A549 (cell line): ENCODE measurements at regions of chr5 and their contacts with region 1.

Region 1: GRCh38 chr5:171207256-171207847 is 101.7 kb upstream of the TLX3 start:
- DNase-seq: peak; percentile 52
- ATAC-seq: peak; percentile 62 to 77; a peak in 5 of 6 replicates
- H3K4me3 ChIP-seq: no peak overlapping the region
- H3K27ac ChIP-seq: no peak overlapping the region
- H3K4me1 ChIP-seq: no peaks in the 10 kb centered on the region
- CTCF ChIP-seq: peak; percentile 80
- EP300 ChIP-seq: no peak
- POLR2A ChIP-seq: no peak
- RAD21 ChIP-seq: peak; percentile 65 to 74

Region 2: DNA sequence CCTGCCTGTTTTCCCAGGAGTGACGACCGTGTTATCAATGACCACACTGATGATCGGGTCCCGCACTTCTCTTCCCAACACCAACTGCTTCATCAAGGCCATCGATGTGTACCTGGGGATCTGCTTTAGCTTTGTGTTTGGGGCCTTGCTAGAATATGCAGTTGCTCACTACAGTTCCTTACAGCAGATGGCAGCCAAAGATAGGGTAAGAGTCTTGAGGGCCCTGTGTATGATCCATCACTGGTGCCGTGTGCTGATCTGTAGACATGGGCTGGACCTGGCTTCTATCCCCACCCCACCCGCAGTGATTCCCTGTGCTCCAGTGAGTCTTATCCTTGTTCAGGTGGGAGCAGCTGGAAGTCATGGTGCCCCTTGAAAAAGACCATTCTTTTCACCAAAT is 397.8 kb before region 1 on chr5:
- CTCF ChIA-PET with region 1: interaction called, 22 read pairs
- POLR2A ChIA-PET with region 1: no interaction called
- DNase-seq: peak; percentile 63 to 66
- ATAC-seq: peak; percentile 97
- H3K4me3 ChIP-seq: no peak overlapping the region
- H3K27ac ChIP-seq: no peak overlapping the region
- H3K4me1 ChIP-seq: no peaks in the 10 kb centered on the region
- CTCF ChIP-seq: peak; percentile 60
- EP300 ChIP-seq: no peak
- POLR2A ChIP-seq: no peak
- RAD21 ChIP-seq: peak; percentile 78 to 81

Region 3: GRCh38 chr5:170848033-170848432 is 359.3 kb before region 1 on chr5:
- CTCF ChIA-PET with region 1: no interaction called
- POLR2A ChIA-PET with region 1: no interaction called
- DNase-seq: no peak
- ATAC-seq: peak in 1 of 2 experiments; percentile 46; a peak in 3 of 6 replicates
- H3K4me3 ChIP-seq: no peak overlapping the region
- H3K27ac ChIP-seq: no peak overlapping the region
- H3K4me1 ChIP-seq: peaks cover 10% of the 10 kb centered on the region; the same call in 1 of the 3 replicates
- CTCF ChIP-seq: no peak
- EP300 ChIP-seq: no peak
- POLR2A ChIP-seq: no peak
- RAD21 ChIP-seq: no peak

Region 4: DNA sequence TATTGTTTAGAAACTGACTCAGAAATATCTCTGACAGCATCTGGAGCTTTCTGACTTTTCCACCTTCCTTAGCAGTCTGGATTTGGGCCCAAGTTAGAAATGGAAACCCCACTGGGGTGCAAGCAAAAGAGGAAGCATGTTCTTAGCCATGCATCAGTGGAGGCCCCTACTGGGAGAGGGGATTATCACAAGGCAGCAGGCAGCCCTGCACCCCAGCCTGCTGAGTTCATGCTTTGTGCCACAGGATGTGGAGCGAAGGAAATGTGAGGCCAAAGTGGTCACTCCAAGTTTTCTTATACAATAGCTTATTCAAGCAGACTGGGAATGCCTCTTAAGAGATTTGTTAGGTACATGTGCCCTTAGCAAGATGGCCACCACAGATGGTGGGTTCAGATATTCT is 44.8 kb before region 1 on chr5:
- CTCF ChIA-PET with region 1: no interaction called
- POLR2A ChIA-PET with region 1: no interaction called
- DNase-seq: peak; percentile 4 to 21
- ATAC-seq: peak; percentile 82 to 88
- H3K4me3 ChIP-seq: no peak overlapping the region
- H3K27ac ChIP-seq: no peak overlapping the region
- H3K4me1 ChIP-seq: no peaks in the 10 kb centered on the region
- CTCF ChIP-seq: peak; percentile 27; the same call in 2 of the 3 replicates
- EP300 ChIP-seq: no peak
- POLR2A ChIP-seq: no peak
- RAD21 ChIP-seq: peak in 1 of 2 experiments; percentile 18; a peak in 2 of 5 replicates

Region 5: GRCh38 chr5:171226105-171226754 is 18.9 kb after region 1 on chr5:
- CTCF ChIA-PET with region 1: interaction called, 15 read pairs
- POLR2A ChIA-PET with region 1: no interaction called
- DNase-seq: no peak
- ATAC-seq: 0 out of 6 replicates have a peak, but pooled peaks of 1 of the 2 experiments have one; percentile 43
- H3K4me3 ChIP-seq: no peak overlapping the region
- H3K27ac ChIP-seq: no peak overlapping the region
- H3K4me1 ChIP-seq: no peaks in the 10 kb centered on the region
- CTCF ChIP-seq: peak; percentile 28
- EP300 ChIP-seq: no peak
- POLR2A ChIP-seq: no peak
- RAD21 ChIP-seq: 0 out of 5 replicates have a peak, but pooled peaks of 1 of the 2 experiments have one; percentile 8

Region 6: DNA sequence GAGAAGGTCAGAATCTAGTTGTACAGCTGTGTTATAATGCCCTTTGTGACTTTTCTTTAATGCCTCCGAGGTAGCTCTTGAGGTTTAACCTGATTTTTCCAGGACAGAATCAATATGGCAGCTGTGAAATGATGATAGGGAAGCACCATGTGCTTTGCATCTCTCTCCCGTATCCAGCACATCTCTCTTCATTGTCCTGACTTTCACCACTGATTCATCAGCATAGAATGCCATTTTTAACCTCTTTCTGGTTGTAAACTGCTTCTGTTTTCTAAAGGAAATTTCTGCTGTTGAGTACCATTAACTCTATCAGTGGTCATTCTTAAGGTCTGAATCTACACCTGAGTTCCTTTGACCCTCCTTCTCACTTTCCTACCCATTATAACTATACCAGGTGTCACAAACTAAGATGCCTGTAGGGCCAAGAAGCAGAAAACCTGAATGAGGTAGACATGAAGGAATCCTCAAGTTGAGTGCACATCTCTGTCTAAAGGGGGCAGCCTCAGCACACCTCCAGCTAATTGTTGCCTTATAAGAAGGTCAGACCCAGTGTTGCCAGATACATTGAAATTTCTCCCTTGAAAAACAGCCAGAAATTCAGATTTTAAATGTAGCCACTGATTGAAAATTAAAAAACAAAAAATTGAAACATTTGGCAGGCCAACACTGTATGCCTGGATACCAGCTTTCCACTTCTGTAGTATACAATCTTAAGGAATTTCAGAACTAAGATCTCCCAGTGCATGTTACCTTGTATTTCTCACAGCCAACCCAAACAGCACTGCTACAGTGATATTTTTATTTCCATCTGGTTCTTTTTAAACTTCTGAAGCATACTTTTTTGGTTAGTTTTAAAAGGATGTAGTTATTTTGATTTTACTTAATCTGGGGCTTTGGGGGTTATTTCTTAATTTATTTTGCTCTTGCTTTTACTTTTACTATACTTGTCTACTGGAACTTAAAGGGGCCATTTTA is 65.9 kb after region 1 on chr5:
- CTCF ChIA-PET with region 1: interaction called, 10 read pairs
- POLR2A ChIA-PET with region 1: no interaction called
- DNase-seq: peak in 1 of 2 experiments; percentile 55
- ATAC-seq: peak; percentile 68 to 88; a peak in 4 of 6 replicates
- H3K4me3 ChIP-seq: no peak overlapping the region
- H3K27ac ChIP-seq: no peak overlapping the region; a peak in 1 of 6 replicates
- H3K4me1 ChIP-seq: peaks cover 21% of the 10 kb centered on the region; the same call in 2 of the 3 replicates
- CTCF ChIP-seq: peak; percentile 40
- EP300 ChIP-seq: no peak
- POLR2A ChIP-seq: no peak
- RAD21 ChIP-seq: peak; percentile 33 to 51; a peak in 3 of 5 replicates

Region 7: GRCh38 chr5:171330021-171330420 is 122.7 kb after region 1 on chr5:
- CTCF ChIA-PET with region 1: interaction called, 239 read pairs
- POLR2A ChIA-PET with region 1: no interaction called
- DNase-seq: no peak
- ATAC-seq: no peak
- H3K4me3 ChIP-seq: no peak overlapping the region
- H3K27ac ChIP-seq: no peak overlapping the region
- H3K4me1 ChIP-seq: no peaks in the 10 kb centered on the region
- CTCF ChIP-seq: no peak
- EP300 ChIP-seq: no peak
- POLR2A ChIP-seq: no peak
- RAD21 ChIP-seq: no peak

Region 8: GRCh38 chr5:171342362-171343111 is 135.2 kb after region 1 on chr5:
- CTCF ChIA-PET with region 1: interaction called, 239 read pairs
- POLR2A ChIA-PET with region 1: no interaction called
- DNase-seq: peak; percentile 40 to 76
- ATAC-seq: peak; percentile 96 to 98
- H3K4me3 ChIP-seq: no peak overlapping the region
- H3K27ac ChIP-seq: no peak overlapping the region
- H3K4me1 ChIP-seq: 0 out of 3 replicates have a peak, but pooled peaks cover 1% of the 10 kb centered on the region
- CTCF ChIP-seq: peak; percentile 84
- EP300 ChIP-seq: no peak
- POLR2A ChIP-seq: no peak
- RAD21 ChIP-seq: peak; percentile 64 to 81